ENCODE measurements at regions of chrX and their contacts with region 1.

Region 1: DNA sequence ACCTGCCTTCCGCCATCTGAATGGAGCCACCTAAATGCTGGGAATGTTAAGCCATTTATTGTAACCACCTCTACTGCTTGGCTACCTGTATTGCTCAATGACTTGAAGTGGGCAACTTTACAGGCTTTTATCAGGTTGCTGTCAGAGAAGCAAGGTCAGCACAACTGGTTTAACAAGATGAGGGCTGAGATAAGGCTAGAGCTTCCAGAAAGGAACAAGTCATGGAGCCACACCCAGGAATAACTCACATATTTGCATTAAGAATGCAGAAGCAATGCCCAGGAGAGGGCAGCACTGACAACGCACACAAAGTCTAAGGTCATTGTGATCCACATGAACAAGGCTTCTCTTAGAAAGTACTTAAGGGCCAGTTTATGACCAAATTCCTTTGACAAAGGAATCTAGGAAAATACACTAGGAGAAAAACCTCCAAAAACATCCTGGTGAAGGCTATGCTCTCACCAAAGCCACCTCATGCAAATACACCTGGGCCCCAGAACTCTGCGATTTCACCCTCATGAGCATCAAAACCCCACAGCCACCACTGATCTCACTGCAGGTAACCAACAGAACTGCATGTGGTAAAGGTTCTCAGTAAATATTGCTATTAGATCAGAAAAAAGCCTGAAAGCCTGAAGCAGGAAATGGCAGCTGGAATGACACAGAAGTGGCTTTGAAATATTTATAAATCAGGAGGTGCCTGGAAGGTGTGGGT is 15.0 kb upstream of the STS start:
- DNase-seq: peak in 6 of 9 experiments; percentile 0 to 51 (median 32)
- ATAC-seq: peak; percentile 66
- H3K4me3 ChIP-seq: no peak overlapping the region
- H3K4me3 Mint-ChIP-seq: no peak overlapping the region
- H3K27ac ChIP-seq: no peak overlapping the region
- H3K27ac Mint-ChIP-seq: peak overlapping the region; percentile 57
- H3K4me1 ChIP-seq: no peaks in the 10 kb centered on the region
- H3K4me1 Mint-ChIP-seq: peaks cover 36% of the 10 kb centered on the region
- H3K27me3 ChIP-seq: no peaks in the 10 kb centered on the region
- H3K27me3 Mint-ChIP-seq: no peaks in the 10 kb centered on the region
- CTCF ChIP-seq: no peak

Region 2: GRCh38 chrX:6852885-6853284 is 279.6 kb before region 1 on chrX:
- CTCF ChIA-PET with region 1: no interaction called
- POLR2A ChIA-PET with region 1: no interaction called
- intact Hi-C with region 1: no loop called
- DNase-seq: no peak
- ATAC-seq: no peak
- H3K4me3 ChIP-seq: no peak overlapping the region
- H3K4me3 Mint-ChIP-seq: no peak overlapping the region
- H3K27ac ChIP-seq: no peak overlapping the region
- H3K27ac Mint-ChIP-seq: no peak overlapping the region
- H3K4me1 ChIP-seq: no peaks in the 10 kb centered on the region
- H3K4me1 Mint-ChIP-seq: no peaks in the 10 kb centered on the region
- H3K27me3 ChIP-seq: no peaks in the 10 kb centered on the region
- H3K27me3 Mint-ChIP-seq: no peaks in the 10 kb centered on the region
- CTCF ChIP-seq: no peak

Region 3: GRCh38 chrX:7170903-7171302 is 38.4 kb after region 1 on chrX:
- CTCF ChIA-PET with region 1: interaction called, 5 read pairs
- POLR2A ChIA-PET with region 1: no interaction called
- intact Hi-C with region 1: loop called (anchors 1 to 2 kb)
- DNase-seq: peak in 8 of 9 experiments; percentile 7 to 62 (median 32)
- ATAC-seq: no peak
- H3K4me3 ChIP-seq: no peak overlapping the region
- H3K4me3 Mint-ChIP-seq: no peak overlapping the region
- H3K27ac ChIP-seq: no peak overlapping the region
- H3K27ac Mint-ChIP-seq: no peak overlapping the region
- H3K4me1 ChIP-seq: no peaks in the 10 kb centered on the region
- H3K4me1 Mint-ChIP-seq: no peaks in the 10 kb centered on the region
- H3K27me3 ChIP-seq: no peaks in the 10 kb centered on the region
- H3K27me3 Mint-ChIP-seq: no peaks in the 10 kb centered on the region
- CTCF ChIP-seq: peak; percentile 28